HCT116 (cell line): ENCODE measurements at regions of chr2 and their contacts with region 1.

Region 1: DNA sequence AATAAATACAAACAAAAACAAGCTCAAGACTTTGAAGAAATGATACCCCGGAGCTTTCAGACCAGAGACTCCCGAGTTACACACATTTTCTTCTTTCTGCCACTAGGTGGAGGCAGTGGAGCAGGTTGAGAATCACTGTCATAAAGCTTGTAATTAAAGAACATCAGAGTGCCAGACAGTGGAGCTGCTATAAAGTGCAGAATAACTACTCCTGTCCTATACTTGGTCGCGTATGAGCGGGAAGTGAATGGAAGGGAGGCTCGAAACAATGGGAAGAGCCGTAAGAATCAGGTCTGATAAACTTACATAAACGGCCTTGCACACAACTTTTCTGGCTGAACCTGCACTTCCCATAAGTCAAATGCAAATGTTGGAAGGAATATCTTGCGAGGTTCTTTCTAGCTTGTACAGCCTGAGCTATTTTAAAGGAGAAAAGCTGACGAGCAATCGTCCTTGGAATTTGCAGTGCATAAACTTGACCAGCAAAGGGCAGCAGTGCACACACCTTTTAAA is 189.0 kb downstream of the RPIA start:
- DNase-seq: peak; percentile 43
- ATAC-seq: peak; percentile 94
- H3K4me3 ChIP-seq: no peak overlapping the region
- H3K27ac ChIP-seq: no peak overlapping the region
- H3K4me1 ChIP-seq: no peaks in the 10 kb centered on the region
- H3K27me3 ChIP-seq: peaks cover 39% of the 10 kb centered on the region
- CTCF ChIP-seq: peak; percentile 64 to 76 (median 74)
- POLR2A ChIP-seq: no peak
- RAD21 ChIP-seq: peak; percentile 66

Region 2: GRCh38 chr2:88831792-88832248 is 48.7 kb before region 1 on chr2:
- CTCF ChIA-PET with region 1: interaction called, 11 read pairs
- POLR2A ChIA-PET with region 1: interaction called, 3 read pairs
- RAD21 ChIA-PET with region 1: no interaction called
- intact Hi-C with region 1: no loop called
- DNase-seq: peak; percentile 42
- ATAC-seq: peak; percentile 96
- H3K4me3 ChIP-seq: no peak overlapping the region
- H3K27ac ChIP-seq: no peak overlapping the region
- H3K4me1 ChIP-seq: no peaks in the 10 kb centered on the region
- H3K27me3 ChIP-seq: 0 out of 2 replicates have a peak, but pooled peaks cover 9% of the 10 kb centered on the region
- CTCF ChIP-seq: peak; percentile 52 to 97 (median 86); a peak in 5 of 6 replicates
- POLR2A ChIP-seq: no peak
- RAD21 ChIP-seq: peak; percentile 63

Region 3: GRCh38 chr2:88857951-88858411 is 22.5 kb before region 1 on chr2:
- CTCF ChIA-PET with region 1: interaction called, 19 read pairs
- POLR2A ChIA-PET with region 1: no interaction called
- RAD21 ChIA-PET with region 1: no interaction called
- intact Hi-C with region 1: no loop called
- DNase-seq: no peak
- ATAC-seq: no peak
- H3K4me3 ChIP-seq: no peak overlapping the region
- H3K27ac ChIP-seq: no peak overlapping the region
- H3K4me1 ChIP-seq: no peaks in the 10 kb centered on the region; a peak in 1 of 4 replicates
- H3K27me3 ChIP-seq: peaks cover 16% of the 10 kb centered on the region; the same call in 1 of the 2 replicates
- CTCF ChIP-seq: no peak
- POLR2A ChIP-seq: no peak
- RAD21 ChIP-seq: no peak

Region 4: GRCh38 chr2:88892207-88892606 is 11.7 kb after region 1 on chr2:
- CTCF ChIA-PET with region 1: interaction called, 11 read pairs
- POLR2A ChIA-PET with region 1: no interaction called
- RAD21 ChIA-PET with region 1: no interaction called
- intact Hi-C with region 1: no loop called
- DNase-seq: no peak
- ATAC-seq: no peak
- H3K4me3 ChIP-seq: no peak overlapping the region
- H3K27ac ChIP-seq: no peak overlapping the region
- H3K4me1 ChIP-seq: no peaks in the 10 kb centered on the region
- H3K27me3 ChIP-seq: peaks cover 17% of the 10 kb centered on the region; the same call in 1 of the 2 replicates
- CTCF ChIP-seq: no peak
- POLR2A ChIP-seq: no peak
- RAD21 ChIP-seq: no peak

Region 5: DNA sequence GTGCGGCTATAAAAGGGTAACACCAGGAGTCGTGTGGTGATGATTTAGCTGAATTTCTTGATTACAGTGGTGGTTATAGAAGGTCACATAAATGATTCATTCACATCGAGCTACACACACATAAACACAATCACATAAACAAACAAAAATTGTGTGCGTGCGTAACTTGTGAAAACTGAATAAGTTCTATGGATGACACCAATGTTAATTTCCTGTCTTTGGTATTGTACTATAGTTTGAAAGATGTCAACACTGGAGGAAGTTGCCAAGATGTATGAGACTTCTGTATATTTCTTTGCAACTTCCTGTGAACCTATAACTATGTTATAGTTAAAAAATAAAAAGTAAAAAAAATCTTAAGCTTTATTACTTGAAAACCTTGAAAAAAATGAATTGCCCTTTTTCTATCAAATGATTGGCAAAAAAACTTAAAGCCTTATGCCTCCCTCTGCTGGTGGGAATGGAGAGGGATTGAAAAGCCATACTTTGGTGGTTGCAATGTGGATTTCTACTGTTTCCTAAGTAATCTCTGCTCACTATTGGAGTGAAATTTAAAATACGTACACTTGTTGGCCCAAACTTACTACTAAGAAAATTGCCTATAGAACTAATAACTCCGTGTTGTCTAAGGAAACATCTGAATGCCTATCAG is 38.7 kb after region 1 on chr2:
- CTCF ChIA-PET with region 1: interaction called, 12 read pairs
- POLR2A ChIA-PET with region 1: no interaction called
- RAD21 ChIA-PET with region 1: no interaction called
- intact Hi-C with region 1: no loop called
- DNase-seq: no peak
- ATAC-seq: peak; percentile 63; the same call in 1 of the 2 replicates
- H3K4me3 ChIP-seq: no peak overlapping the region
- H3K27ac ChIP-seq: no peak overlapping the region
- H3K4me1 ChIP-seq: no peaks in the 10 kb centered on the region
- H3K27me3 ChIP-seq: peaks cover 38% of the 10 kb centered on the region
- CTCF ChIP-seq: peak; percentile 45 to 75 (median 66); a peak in 4 of 6 replicates
- POLR2A ChIP-seq: no peak
- RAD21 ChIP-seq: peak; percentile 43; the same call in 1 of the 2 replicates